ENCODE measurements at regions of chr4 and their contacts with region 1.

Region 1: DNA sequence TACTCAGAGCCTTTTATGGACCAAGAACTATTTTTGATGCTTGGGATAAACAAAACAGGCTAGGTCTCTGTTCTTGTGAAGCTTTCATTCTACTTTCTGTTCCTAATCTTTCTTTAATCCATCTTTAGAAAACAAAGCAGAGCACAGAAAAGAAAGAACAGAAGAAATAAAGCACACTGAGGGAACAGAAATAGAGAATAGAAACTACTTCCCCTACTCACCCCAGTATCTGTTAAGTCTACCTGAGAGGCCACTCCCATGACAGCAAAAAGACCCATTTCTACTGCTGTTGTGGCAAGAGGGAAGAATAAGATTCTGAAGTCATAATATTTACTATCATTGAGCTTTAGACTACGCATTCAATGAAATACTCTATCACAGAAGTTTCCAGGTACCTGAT is 9.2 kb downstream of the RFC1 start:
- DNase-seq: peak; percentile 66
- CTCF ChIP-seq: no peak

Region 2: GRCh38 chr4:39181905-39182638 is 174.9 kb before region 1 on chr4 and contains the start of gene WDR19:
- CTCF ChIA-PET with region 1: no interaction called
- POLR2A ChIA-PET with region 1: no interaction called
- DNase-seq: peak; percentile 97
- CTCF ChIP-seq: peak; percentile 52

Region 3: GRCh38 chr4:39204543-39204942 is 152.5 kb before region 1 on chr4:
- CTCF ChIA-PET with region 1: no interaction called
- POLR2A ChIA-PET with region 1: no interaction called
- DNase-seq: no peak
- CTCF ChIP-seq: no peak

Region 4: GRCh38 chr4:39341075-39341725 is 15.8 kb before region 1 on chr4:
- CTCF ChIA-PET with region 1: interaction called, 10 read pairs
- POLR2A ChIA-PET with region 1: interaction called, 3 read pairs
- DNase-seq: no peak
- CTCF ChIP-seq: no peak

Region 5: DNA sequence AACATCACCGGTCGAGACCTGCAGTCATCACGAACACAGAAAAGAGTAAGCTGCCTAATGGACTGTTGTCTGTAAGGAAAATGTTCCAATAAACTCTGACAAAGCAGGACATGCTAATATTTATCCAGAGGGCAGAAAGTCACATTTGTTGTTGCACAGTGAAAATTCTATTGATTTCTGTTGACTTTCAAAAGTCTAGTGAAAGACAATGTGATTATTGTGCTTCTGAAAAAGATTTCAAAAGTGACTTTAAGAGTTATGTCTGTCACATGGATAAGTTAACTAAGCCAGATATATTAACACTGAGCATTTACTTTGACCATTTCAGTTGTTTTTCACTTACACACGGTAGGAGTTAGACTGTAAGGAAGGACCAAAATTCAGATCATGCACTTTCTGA is 18.5 kb after region 1 on chr4:
- CTCF ChIA-PET with region 1: no interaction called
- POLR2A ChIA-PET with region 1: no interaction called
- DNase-seq: no peak
- CTCF ChIP-seq: no peak